Heart right ventricle (tissue), 16 donors: ENCODE measurements at regions of chr9 and their contacts with region 1.

Region 1: DNA sequence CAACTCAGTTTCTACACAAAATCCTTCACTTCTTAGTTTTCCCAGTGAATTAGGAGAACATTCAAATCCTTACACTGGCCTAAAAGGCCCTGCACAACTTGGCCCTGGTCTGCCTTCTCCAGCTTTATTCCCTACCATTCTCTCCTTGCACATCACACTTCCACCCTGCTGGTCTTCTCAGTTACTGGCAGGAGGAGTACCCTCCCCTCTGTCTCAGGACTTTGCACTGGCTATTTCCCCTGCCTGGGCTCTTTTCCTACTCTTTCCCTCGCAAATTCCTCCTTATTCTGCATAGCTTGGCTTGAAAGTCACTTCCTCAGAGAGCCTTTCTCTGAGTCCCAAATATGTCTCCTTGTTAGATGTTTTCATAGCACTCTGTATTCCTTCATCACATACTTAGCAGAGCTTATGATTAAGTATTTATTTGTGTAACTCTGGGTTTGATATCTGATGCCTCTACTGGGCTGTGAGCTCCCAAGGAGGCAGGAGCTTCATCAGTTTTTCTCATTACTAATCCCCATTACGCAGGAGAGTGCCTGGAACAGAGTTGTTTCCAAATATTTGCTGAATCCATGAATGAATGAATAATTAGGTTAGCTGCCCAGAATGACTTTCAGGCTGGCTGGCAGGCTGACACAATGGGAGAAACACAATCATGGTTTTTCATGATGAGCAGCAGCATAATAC is 159.8 kb upstream of the KLF9 start:
- DNase-seq: no peak
- ATAC-seq: peak; percentile 53 to 86 (median 70)
- H3K4me3 ChIP-seq: no peak overlapping the region
- H3K27ac ChIP-seq: peak overlapping the region in 9 of 10 donors; percentile 11 to 73 (median 47)
- H3K4me1 ChIP-seq: peaks cover 0 to 34% (median 14%) of the 10 kb centered on the region in 9 donors
- H3K27me3 ChIP-seq: no peaks in the 10 kb centered on the region
- CTCF ChIP-seq: no peak

Region 2: GRCh38 chr9:70510157-70510770 is 64.0 kb before region 1 on chr9:
- intact Hi-C with region 1: loop called in 1 of 10 experiments (anchors 10 kb)
- DNase-seq: peak; percentile 47 to 51
- ATAC-seq: peak in 2 of 8 donors; percentile 61 to 71
- H3K4me3 ChIP-seq: no peak overlapping the region
- H3K27ac ChIP-seq: no peak overlapping the region
- H3K4me1 ChIP-seq: peaks cover 0 to 6% (median 0%) of the 10 kb centered on the region in 9 donors
- H3K27me3 ChIP-seq: no peaks in the 10 kb centered on the region
- CTCF ChIP-seq: peak in 8 of 9 donors; percentile 50 to 77 (median 56)

Region 3: DNA sequence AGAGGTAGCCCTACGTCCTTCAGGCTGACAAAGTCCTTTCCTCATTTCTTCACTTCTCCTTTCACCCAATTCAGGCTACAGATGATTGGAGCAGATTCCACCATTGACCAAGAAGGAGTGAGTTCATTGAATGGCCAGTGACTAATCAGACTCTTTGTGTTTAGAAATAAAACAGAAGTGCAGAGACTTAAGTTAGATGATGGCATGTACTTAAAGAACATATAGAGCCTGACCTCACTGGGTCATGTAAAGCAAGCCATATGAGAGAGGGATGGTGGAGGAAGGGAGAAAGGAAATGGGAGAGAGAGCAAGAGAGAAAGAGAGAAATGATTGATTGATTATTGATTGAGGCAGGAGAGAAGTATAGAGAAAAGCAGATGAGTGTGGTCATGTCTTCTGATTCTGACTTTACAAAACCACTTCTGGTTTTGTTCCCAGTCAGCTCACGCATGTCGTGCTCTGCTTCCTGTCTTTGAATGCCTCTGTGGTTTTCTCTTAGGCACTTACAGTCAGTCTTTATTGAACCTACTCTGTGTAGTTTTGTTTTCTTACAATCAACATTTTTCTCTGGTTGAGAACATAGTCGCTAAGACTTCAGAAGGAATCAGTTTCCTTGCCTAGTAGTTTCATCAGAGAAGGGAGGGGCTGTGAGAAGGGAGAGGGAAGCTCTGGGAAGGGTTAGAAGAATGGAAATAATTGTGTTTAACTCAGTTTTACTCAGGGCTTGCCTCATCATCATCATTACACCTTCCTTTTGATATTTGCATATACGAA is 10.7 kb before region 1 on chr9:
- intact Hi-C with region 1: loop called in 1 of 10 experiments (anchors 2 kb)
- DNase-seq: no peak
- ATAC-seq: peak in 7 of 8 donors; percentile 32 to 79 (median 66)
- H3K4me3 ChIP-seq: no peak overlapping the region
- H3K27ac ChIP-seq: peak overlapping the region in 6 of 10 donors; percentile 1 to 91 (median 24)
- H3K4me1 ChIP-seq: peaks cover 0 to 39% (median 0%) of the 10 kb centered on the region in 9 donors
- H3K27me3 ChIP-seq: no peaks in the 10 kb centered on the region
- CTCF ChIP-seq: no peak